Mammary epithelial cell (primary cell): ENCODE measurements at regions of chr3 and their contacts with region 1.

Region 1: GRCh38 chr3:197524128-197524527 is 31.6 kb downstream of the BDH1 start:
- DNase-seq: no peak
- H3K4me3 ChIP-seq: no peak overlapping the region
- H3K27ac ChIP-seq: no peak overlapping the region
- H3K4me1 ChIP-seq: no peaks in the 10 kb centered on the region
- H3K27me3 ChIP-seq: no peaks in the 10 kb centered on the region
- CTCF ChIP-seq: no peak

Region 2: DNA sequence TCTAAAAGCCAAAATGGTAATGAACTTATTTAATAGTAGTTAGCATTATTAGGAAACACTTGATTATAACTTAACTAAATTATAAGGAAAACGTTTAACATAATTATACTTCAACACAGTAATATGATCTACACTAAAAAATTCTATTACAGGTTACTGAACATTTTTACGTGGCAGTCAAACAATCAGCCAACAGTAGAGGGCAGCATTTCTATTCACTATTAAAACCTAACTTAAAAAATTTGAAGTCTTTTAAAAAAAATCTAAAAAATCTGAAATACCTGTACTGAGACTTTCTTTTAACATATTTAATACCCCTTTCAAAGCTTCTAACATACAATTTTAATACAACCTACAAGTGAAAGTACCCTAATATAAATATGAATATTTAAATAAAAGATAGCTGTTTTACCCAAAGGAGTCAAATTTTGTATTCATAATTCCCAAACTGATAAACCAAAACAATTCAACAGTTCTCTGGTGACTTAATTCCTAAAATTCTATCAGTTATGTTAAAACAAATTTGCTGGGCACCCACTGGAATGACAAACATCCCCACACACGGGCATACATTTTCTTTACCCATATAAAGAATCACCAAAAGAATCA is 267.2 kb before region 1 on chr3:
- CTCF ChIA-PET with region 1: interaction called, 32 read pairs
- dilution Hi-C with region 1: no loop called
- in situ Hi-C with region 1: no loop called
- intact Hi-C with region 1: no loop called
- DNase-seq: peak; percentile 24
- H3K4me3 ChIP-seq: no peak overlapping the region
- H3K27ac ChIP-seq: peak overlapping the region; percentile 43
- H3K4me1 ChIP-seq: peaks cover 19% of the 10 kb centered on the region
- H3K27me3 ChIP-seq: no peaks in the 10 kb centered on the region
- CTCF ChIP-seq: peak; percentile 62 to 70